ENCODE measurements at regions of chr14 and their contacts with region 1.

Region 1: DNA sequence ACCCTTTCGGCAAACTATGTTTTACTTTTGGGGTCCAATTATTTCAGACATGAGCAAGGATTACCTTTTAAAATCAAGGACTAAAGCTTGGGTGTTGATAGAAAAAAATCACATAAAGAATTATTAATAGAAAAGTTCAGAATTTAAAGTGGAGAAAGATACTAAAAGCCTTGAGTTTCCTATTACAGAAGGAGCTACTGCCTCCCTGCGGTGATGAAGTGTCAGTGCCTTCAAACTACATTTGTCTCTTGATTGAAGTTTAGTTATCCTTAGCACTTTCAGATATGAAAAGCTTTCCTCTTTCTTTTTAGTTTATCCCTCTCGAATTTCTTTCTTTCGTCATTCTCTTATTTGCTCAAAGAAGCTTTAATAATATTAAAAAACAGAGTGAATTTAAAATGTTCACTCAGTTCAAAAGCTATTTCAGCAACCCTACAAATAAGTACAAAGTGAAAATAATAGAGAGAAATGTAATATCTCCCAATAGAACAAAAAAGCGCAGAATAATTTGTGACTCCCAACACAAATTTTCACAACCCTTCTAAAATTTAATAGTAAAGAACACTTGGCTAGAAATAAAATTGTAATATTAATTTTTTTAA is 87.6 kb downstream of the SEC23A start:
- DNase-seq: peak; percentile 28
- ATAC-seq: peak; percentile 62
- H3K4me3 ChIP-seq: no peak overlapping the region
- H3K27ac ChIP-seq: no peak overlapping the region
- H3K4me1 ChIP-seq: no peaks in the 10 kb centered on the region
- H3K27me3 ChIP-seq: no peaks in the 10 kb centered on the region
- CTCF ChIP-seq: peak; percentile 39 to 85 (median 83); a peak in 5 of 6 replicates
- POLR2A ChIP-seq: no peak
- RAD21 ChIP-seq: peak; percentile 58

Region 2: DNA sequence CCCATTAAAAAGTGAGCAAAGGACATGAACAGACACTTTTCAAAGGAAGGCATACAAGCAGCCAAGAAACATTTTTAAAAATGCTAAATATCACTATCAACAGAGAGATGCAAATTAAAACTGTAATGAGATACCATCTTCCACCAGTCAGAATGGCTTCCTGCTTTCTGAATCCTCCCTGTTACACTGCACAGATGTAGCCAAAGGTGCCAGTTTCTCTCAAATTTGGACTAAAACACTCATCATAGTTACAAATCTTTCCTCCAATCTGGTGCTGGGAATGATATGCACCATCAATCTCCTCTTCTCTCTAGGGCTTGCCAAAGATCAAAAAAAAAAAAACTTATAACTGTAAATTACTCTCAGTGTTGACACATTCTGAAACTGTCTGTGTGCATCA is 447.8 kb before region 1 on chr14:
- CTCF ChIA-PET with region 1: no interaction called
- POLR2A ChIA-PET with region 1: no interaction called
- RAD21 ChIA-PET with region 1: no interaction called
- intact Hi-C with region 1: no loop called
- DNase-seq: no peak
- ATAC-seq: no peak
- H3K4me3 ChIP-seq: no peak overlapping the region
- H3K27ac ChIP-seq: no peak overlapping the region
- H3K4me1 ChIP-seq: no peaks in the 10 kb centered on the region
- H3K27me3 ChIP-seq: no peaks in the 10 kb centered on the region
- CTCF ChIP-seq: no peak
- POLR2A ChIP-seq: no peak
- RAD21 ChIP-seq: no peak

Region 3: DNA sequence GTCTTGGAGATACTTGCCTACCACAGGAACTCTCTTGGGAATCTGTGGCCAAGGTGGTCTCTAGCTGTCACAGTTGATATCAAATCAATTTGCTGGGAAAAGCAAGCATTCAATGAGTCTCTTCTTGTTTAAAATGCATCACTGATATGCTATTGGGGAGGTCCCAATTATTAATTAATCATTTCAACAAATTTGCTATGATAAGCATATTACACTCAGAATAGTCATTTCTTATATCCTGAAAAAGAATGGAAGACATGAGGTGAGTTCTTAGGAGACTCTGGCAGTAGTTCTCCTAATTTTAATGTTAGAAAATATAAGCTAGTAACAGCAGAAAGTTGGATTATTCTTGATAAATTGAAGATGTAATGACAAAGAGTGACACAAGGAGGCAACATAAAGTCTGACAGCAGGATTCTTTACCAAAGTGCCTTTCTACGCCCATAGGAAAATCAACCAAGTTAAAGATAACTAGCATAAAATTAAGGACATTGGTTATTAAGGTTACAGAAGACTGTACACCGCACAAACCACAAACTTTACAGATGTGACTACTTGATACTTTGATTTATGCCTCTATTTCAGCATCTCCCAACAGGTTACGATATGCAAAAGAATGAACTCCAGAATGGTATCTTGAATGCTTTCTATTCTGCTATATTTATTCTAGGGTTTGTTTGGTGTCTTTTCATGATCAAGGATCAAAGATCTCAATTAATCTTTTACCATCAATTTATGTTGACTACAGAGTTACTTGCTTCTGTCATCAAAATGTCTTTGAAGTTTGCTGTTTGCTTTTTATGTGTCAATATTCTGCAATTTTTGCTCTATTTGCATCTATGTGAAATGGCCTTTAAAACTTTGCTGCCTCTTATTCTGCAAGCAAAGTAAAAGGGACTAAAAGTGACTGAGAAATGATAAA is 410.0 kb before region 1 on chr14:
- CTCF ChIA-PET with region 1: interaction called, 5 read pairs
- POLR2A ChIA-PET with region 1: no interaction called
- RAD21 ChIA-PET with region 1: no interaction called
- intact Hi-C with region 1: loop called (anchors 2 kb)
- DNase-seq: no peak
- ATAC-seq: no peak
- H3K4me3 ChIP-seq: no peak overlapping the region
- H3K27ac ChIP-seq: no peak overlapping the region
- H3K4me1 ChIP-seq: no peaks in the 10 kb centered on the region
- H3K27me3 ChIP-seq: no peaks in the 10 kb centered on the region
- CTCF ChIP-seq: peak in 2 of 3 experiments; percentile 17 to 46; a peak in 3 of 6 replicates
- POLR2A ChIP-seq: no peak
- RAD21 ChIP-seq: peak; percentile 24; the same call in 1 of the 2 replicates

Region 4: DNA sequence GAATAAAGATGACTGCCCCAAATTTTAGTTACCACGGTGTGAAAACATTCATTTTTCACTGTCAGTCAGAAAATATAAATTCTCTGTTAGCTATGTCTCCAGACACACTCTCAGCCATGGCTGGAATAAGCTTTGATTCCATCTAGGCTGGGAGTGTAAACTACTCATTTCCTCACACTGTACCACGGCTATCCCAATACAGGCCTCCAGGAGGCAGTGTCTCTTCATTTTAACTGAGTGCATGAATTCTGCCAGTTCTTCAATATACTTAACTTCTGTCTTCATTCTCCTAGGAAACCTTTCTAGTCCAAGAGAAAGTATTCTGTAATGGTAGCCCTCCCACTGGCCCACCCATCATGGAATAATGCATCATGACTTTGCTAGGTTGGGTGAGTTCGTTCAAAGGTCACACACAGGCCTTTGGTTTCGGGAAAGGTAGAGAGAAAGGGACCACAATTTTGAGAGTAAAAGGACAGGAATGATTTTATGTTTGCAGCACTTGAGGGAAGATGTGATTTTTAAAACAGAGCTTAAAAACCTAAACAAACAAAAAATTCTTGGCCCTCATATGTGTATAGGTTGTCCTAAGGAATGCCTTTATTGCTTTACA is 293.5 kb before region 1 on chr14:
- CTCF ChIA-PET with region 1: interaction called, 17 read pairs
- POLR2A ChIA-PET with region 1: no interaction called
- RAD21 ChIA-PET with region 1: interaction called in 1 of 2 experiments, 4 read pairs
- intact Hi-C with region 1: loop called (anchors 1 kb)
- DNase-seq: peak; percentile 40
- ATAC-seq: peak; percentile 93
- H3K4me3 ChIP-seq: no peak overlapping the region
- H3K27ac ChIP-seq: no peak overlapping the region
- H3K4me1 ChIP-seq: no peaks in the 10 kb centered on the region
- H3K27me3 ChIP-seq: no peaks in the 10 kb centered on the region
- CTCF ChIP-seq: peak; percentile 41 to 85 (median 82); a peak in 5 of 6 replicates
- POLR2A ChIP-seq: no peak
- RAD21 ChIP-seq: peak; percentile 73